ENCODE measurements at regions of chr9 and their contacts with region 1.

Region 1: GRCh38 chr9:35814841-35815543 is at the start of gene HINT2:
- DNase-seq: peak; percentile 95
- H3K4me3 ChIP-seq: peak within 1 kb of the TSS; percentile 81 to 92
- H3K27ac ChIP-seq: peak within 1 kb of the TSS; percentile 77 to 96
- H3K4me1 ChIP-seq: peaks cover 7 to 30% of the 10 kb centered on the region in 2 experiments; a peak in 3 of 4 replicates
- H3K27me3 ChIP-seq: no peaks in the 10 kb centered on the region
- CTCF ChIP-seq: no peak
- EP300 ChIP-seq: no peak
- RAD21 ChIP-seq: no peak
- polyA plus RNA-seq, gene HINT2: 39.9 and 57.2 TPM in 2 replicates

Region 2: GRCh38 chr9:35367451-35367850 is 447.5 kb before region 1 on chr9:
- CTCF ChIA-PET with region 1: no interaction called
- POLR2A ChIA-PET with region 1: no interaction called
- DNase-seq: no peak
- H3K4me3 ChIP-seq: peak overlapping the region in 1 of 2 experiments; percentile 8; a peak in 1 of 4 replicates
- H3K27ac ChIP-seq: peak overlapping the region in 1 of 2 experiments; percentile 45; a peak in 1 of 4 replicates
- H3K4me1 ChIP-seq: peaks cover 0 to 14% of the 10 kb centered on the region in 2 experiments; a peak in 1 of 4 replicates
- H3K27me3 ChIP-seq: no peaks in the 10 kb centered on the region
- CTCF ChIP-seq: no peak
- EP300 ChIP-seq: no peak
- RAD21 ChIP-seq: no peak

Region 3: DNA sequence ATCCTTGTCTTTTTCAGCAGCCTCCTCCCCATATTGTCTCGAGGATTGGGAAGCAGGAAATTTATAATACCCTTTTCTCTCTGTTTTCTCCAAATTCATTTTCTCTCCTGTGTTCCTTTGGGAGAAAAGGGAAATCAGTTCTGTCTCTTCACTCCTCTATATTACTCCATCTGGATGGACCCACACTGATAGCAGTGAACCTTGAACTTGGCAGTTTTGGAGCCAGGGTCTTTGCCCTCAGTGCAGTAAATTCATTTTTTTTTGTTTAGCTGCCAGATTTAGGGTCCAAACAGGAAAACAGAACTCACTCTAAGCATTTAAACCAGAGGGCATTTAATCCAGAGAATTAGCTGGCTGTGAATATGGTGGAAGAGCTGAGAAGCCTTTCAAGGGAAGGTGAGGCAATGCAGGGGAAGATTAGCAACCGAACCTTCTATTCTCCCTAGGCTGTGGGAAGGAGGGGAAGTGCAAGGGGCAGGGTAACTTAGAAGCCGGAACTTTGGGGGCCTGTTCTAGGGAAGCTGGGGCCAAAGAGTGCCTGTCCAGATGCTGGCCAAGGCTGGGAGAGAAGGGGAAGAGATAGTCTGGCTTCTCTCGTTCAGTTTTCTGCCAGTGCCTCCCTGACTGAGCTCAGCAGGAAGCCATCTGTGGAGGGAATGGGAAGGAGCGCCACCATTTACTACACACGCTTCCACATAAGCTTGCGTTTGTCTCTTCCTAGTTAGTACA is 39.9 kb before region 1 on chr9:
- CTCF ChIA-PET with region 1: interaction called, 13 read pairs
- POLR2A ChIA-PET with region 1: no interaction called
- DNase-seq: no peak
- H3K4me3 ChIP-seq: no peak overlapping the region
- H3K27ac ChIP-seq: no peak overlapping the region
- H3K4me1 ChIP-seq: peaks cover 5 to 6% of the 10 kb centered on the region in 2 experiments; a peak in 3 of 4 replicates
- H3K27me3 ChIP-seq: no peaks in the 10 kb centered on the region
- CTCF ChIP-seq: no peak
- EP300 ChIP-seq: no peak
- RAD21 ChIP-seq: no peak

Region 4: DNA sequence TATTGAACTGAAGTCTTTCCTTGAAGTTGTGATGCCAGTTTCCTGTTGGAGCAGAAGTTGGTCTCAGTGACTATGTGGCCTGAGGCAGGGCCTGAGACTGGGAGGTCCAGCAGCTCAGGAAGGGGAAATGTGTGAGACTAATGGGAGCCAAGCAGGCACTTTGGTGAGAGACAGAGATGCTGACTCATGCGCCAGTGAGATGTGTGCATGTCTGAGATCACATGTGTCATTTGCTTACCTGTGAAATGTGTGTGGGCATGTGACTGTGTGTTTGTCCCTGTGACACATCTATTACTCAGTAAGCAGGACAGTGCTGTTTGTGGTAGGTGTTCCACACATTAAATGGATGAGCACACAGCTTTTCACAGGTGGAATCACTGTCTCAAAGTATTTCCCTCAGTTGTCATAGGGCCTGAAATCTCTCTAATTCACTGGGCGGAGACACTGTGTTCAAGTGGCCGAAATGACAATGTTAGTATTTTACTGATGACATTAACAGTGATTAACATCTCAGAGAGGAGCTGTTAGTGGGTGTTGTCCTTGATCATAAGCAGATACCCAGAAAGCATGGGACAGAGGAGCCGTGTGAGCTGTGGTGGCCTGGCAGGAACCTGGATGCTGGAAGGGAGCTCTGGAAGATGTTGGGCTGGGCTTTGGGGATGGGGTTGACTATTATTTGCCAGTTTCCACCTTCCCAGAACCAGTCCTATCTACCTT is 16.2 kb before region 1 on chr9:
- CTCF ChIA-PET with region 1: interaction called, 10 read pairs
- POLR2A ChIA-PET with region 1: no interaction called
- DNase-seq: peak; percentile 40
- H3K4me3 ChIP-seq: no peak overlapping the region
- H3K27ac ChIP-seq: peak overlapping the region in 1 of 2 experiments; percentile 47; a peak in 3 of 4 replicates
- H3K4me1 ChIP-seq: peaks cover 0 to 10% of the 10 kb centered on the region in 2 experiments; a peak in 2 of 4 replicates
- H3K27me3 ChIP-seq: no peaks in the 10 kb centered on the region
- CTCF ChIP-seq: no peak
- EP300 ChIP-seq: no peak
- RAD21 ChIP-seq: no peak

Region 5: GRCh38 chr9:35829084-35829763 is 14.2 kb after region 1 on chr9 and contains the start of gene TMEM8B:
- CTCF ChIA-PET with region 1: interaction called, 30 read pairs
- POLR2A ChIA-PET with region 1: no interaction called
- DNase-seq: peak; percentile 97
- H3K4me3 ChIP-seq: peak within 1 kb of the TSS; percentile 56 to 80
- H3K27ac ChIP-seq: peak within 1 kb of the TSS; percentile 46 to 56; a peak in 3 of 4 replicates
- H3K4me1 ChIP-seq: peaks cover 7 to 25% of the 10 kb centered on the region in 2 experiments; a peak in 1 of 4 replicates
- H3K27me3 ChIP-seq: no peaks in the 10 kb centered on the region
- CTCF ChIP-seq: no peak
- EP300 ChIP-seq: no peak
- RAD21 ChIP-seq: no peak
- polyA plus RNA-seq, gene TMEM8B: 5.3 and 5.8 TPM in 2 replicates

Region 6: GRCh38 chr9:35891646-35892045 is 76.7 kb after region 1 on chr9:
- CTCF ChIA-PET with region 1: no interaction called
- POLR2A ChIA-PET with region 1: no interaction called
- DNase-seq: no peak
- H3K4me3 ChIP-seq: no peak overlapping the region
- H3K27ac ChIP-seq: no peak overlapping the region
- H3K4me1 ChIP-seq: no peaks in the 10 kb centered on the region
- H3K27me3 ChIP-seq: 0 out of 2 replicates have a peak, but pooled peaks cover 8% of the 10 kb centered on the region
- CTCF ChIP-seq: no peak
- EP300 ChIP-seq: no peak
- RAD21 ChIP-seq: no peak